Activated CD4-positive, alpha-beta T cell treated with anti-CD3 and anti-CD28 coated beads for 36 hours (primary cell): ENCODE measurements at regions of chr19 and their contacts with region 1.

Region 1: DNA sequence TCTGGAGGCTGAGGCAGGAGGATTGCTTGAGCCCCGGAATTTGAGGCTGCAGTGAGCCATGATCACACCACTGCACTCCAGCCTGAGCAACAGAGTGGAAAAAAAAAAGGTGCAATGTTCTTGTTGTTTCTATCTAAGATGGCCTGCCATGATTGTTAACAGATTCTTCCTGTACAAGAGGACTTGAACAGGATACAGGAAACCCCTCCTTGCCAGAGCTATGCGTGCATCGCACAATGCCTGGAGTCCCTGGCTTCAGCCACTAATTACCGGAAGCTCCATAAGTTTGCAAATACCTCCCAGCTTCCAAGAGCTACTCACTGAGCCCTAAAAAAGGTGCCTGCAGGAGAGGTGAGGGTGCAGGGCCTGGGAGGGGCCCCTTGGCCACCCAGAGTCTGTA is 13.1 kb upstream of the HIF3A start:
- DNase-seq: no peak
- ATAC-seq: no peak
- H3K4me3 Mint-ChIP-seq: no peak overlapping the region
- H3K27ac Mint-ChIP-seq: no peak overlapping the region
- H3K4me1 Mint-ChIP-seq: no peaks in the 10 kb centered on the region
- H3K27me3 Mint-ChIP-seq: peaks cover 6% of the 10 kb centered on the region

Region 2: GRCh38 chr19:45746866-45747265 is 536.9 kb before region 1 on chr19:
- CTCF ChIA-PET with region 1: no interaction called
- POLR2A ChIA-PET with region 1: no interaction called
- intact Hi-C with region 1: no loop called
- DNase-seq: no peak
- ATAC-seq: no peak
- H3K4me3 Mint-ChIP-seq: no peak overlapping the region
- H3K27ac Mint-ChIP-seq: no peak overlapping the region
- H3K4me1 Mint-ChIP-seq: no peaks in the 10 kb centered on the region
- H3K27me3 Mint-ChIP-seq: peaks cover 8% of the 10 kb centered on the region

Region 3: DNA sequence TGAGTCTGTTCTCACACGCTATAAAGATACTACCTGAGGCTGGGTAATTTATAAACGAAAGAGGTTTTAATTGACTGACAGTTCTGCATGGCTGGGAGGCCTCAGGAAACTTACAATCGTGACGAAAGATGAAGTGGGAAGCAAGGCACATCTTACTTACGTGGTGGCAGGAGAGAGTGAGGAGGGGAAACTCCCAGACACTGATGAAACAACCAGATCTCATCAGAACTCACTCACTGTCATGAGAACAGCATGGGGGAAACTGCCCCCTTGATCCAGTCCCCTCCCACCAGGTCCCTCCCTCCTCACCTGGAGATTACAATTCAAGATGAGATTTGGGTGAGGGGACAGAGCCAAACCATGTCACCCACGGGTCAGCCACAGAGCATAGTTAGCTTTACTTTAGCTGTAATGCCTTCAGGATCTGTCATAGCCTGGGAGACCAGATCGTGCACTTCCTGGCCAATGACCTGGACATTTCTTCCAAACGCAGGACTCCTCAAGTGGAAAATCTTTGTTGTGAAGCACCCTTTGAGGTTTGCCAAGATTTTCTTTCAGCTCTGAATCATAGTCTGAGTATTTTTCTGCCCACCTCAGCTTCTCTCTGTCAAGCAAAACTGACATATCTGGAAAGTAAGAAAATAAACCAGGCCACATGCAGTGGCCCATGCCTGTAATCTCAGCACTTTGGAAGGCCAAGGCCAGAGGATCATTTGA is 12.1 kb before region 1 on chr19:
- CTCF ChIA-PET with region 1: interaction called, 15 read pairs
- POLR2A ChIA-PET with region 1: no interaction called
- intact Hi-C with region 1: no loop called
- DNase-seq: peak; percentile 27
- ATAC-seq: peak; percentile 85
- H3K4me3 Mint-ChIP-seq: no peak overlapping the region
- H3K27ac Mint-ChIP-seq: peak overlapping the region; percentile 23
- H3K4me1 Mint-ChIP-seq: peaks cover 11% of the 10 kb centered on the region
- H3K27me3 Mint-ChIP-seq: peaks cover 49% of the 10 kb centered on the region

Region 4: DNA sequence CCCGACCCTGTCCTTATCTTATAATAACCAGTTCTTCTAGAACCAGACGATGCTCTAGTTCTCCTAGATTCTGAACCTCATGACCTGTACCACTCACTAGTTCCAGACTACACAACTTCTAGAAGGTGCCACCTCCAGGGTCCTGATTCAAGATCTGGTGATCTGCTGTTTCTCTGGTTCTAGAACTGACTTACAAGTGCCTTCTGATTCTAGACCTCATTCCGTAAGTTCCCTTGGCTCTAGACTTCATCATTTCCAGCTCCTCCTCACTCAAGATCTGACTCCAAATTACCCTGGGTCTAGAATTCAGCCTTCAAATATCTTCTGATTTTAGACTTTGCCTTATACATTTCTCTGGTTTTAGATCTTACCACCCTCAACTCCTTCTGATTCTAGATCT is 58.2 kb after region 1 on chr19:
- CTCF ChIA-PET with region 1: no interaction called
- POLR2A ChIA-PET with region 1: no interaction called
- intact Hi-C with region 1: no loop called
- DNase-seq: no peak
- ATAC-seq: no peak
- H3K4me3 Mint-ChIP-seq: no peak overlapping the region
- H3K27ac Mint-ChIP-seq: no peak overlapping the region
- H3K4me1 Mint-ChIP-seq: peaks cover 3% of the 10 kb centered on the region
- H3K27me3 Mint-ChIP-seq: no peaks in the 10 kb centered on the region

Region 5: DNA sequence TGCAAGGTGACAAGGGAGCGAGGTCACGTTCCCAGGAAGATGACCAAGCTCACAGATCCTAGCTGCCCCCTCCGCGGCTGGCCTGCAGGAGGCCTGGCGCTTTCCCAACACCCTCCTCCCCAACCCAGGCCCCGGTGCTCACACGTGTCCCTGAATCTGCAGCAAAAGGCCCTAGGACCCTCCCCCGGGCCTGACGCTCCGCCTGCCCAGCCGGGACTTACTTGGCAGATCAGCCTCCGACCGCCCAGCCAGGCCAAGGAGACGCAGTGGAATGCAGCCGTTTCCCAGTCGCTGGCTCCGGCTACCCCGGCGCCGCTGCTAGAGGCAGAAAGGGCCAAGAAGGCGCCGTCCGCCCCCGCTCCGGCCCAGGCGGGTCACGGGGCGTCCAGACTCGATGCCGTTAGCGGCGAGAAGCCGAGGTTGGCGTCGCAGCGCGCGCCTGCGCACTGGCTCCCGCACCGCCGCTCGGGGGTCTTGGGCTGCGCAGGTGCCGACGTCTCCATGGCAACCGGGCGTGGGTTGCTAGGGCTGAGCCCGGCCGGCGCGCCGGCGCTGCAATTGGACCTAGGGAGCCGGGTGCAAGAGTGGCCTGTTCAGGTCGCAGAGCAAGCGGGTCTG is 187.5 kb after region 1 on chr19 and contains the start of gene PNMA8A:
- CTCF ChIA-PET with region 1: no interaction called
- POLR2A ChIA-PET with region 1: no interaction called
- intact Hi-C with region 1: no loop called
- DNase-seq: no peak
- ATAC-seq: no peak
- H3K4me3 Mint-ChIP-seq: no peak within 1 kb of the TSS
- H3K27ac Mint-ChIP-seq: no peak within 1 kb of the TSS
- H3K4me1 Mint-ChIP-seq: peaks cover 10% of the 10 kb centered on the region
- H3K27me3 Mint-ChIP-seq: peaks cover 50% of the 10 kb centered on the region
- total RNA-seq, gene PNMA8A: not detected

Region 6: GRCh38 chr19:46487802-46488445 is 204.2 kb after region 1 on chr19:
- CTCF ChIA-PET with region 1: interaction called, 3 read pairs
- POLR2A ChIA-PET with region 1: no interaction called
- intact Hi-C with region 1: loop called (anchors 1 to 2 kb)
- DNase-seq: peak; percentile 86
- ATAC-seq: peak; percentile 68
- H3K4me3 Mint-ChIP-seq: no peak overlapping the region
- H3K27ac Mint-ChIP-seq: no peak overlapping the region
- H3K4me1 Mint-ChIP-seq: peaks cover 11% of the 10 kb centered on the region
- H3K27me3 Mint-ChIP-seq: peaks cover 61% of the 10 kb centered on the region

Region 7: DNA sequence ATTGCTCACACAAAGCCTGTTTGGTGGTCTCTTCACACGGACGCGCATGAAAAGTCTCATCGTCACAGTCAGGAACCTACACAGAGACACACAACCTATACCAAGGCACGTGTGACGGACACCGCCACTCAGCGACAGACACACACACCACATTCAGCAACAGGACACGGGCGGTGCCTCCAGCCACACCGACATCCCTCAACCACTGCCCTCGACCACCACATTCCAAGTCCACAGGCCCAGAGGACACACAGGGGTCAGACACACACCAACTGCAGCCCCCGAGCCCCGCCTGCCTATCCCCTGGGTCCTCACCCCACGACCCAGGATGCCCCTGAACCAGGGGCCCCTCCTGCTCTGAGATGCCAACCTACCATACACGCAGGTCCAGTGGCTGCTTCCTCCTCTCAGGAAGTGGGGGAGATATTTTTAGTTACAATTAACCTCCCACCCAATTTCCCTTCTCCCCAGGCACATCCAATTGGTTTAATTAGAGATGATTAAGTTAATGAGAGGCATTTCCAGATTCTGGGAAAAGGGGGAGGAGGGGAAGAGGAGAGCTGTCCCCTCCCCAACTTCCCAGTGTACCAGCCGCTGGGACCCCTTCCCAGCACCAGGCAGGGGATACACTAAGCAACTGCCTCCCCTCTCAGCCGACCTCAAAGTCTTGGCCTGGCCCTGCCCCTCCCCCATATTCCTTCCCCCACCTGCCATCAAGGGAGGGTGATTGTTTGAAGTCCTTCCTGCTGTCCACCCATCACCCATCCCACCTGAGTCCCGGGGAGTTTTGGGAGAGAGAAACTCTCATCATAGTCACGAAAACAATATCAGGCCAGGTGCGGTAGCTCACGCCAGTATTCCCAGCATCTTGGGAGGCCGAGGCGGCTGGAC is 1115.2 kb after region 1 on chr19:
- CTCF ChIA-PET with region 1: no interaction called
- POLR2A ChIA-PET with region 1: no interaction called
- intact Hi-C with region 1: loop called in 1 of 2 experiments (anchors 5 kb)
- DNase-seq: no peak
- ATAC-seq: no peak
- H3K4me3 Mint-ChIP-seq: no peak overlapping the region
- H3K27ac Mint-ChIP-seq: no peak overlapping the region
- H3K4me1 Mint-ChIP-seq: no peaks in the 10 kb centered on the region
- H3K27me3 Mint-ChIP-seq: peaks cover 6% of the 10 kb centered on the region